CD14-positive monocyte (primary cell): ENCODE measurements at regions of chr19 and their contacts with region 1.

Region 1: GRCh38 chr19:40603389-40604135 is 2.4 kb downstream of the LTBP4 start:
- DNase-seq: peak; percentile 84 to 92 (median 90)
- H3K4me3 ChIP-seq: peak overlapping the region in 2 of 3 experiments; percentile 34 to 73
- H3K4me3 Mint-ChIP-seq: peak overlapping the region; percentile 73 to 91
- H3K27ac ChIP-seq: no peak overlapping the region
- H3K27ac Mint-ChIP-seq: peak overlapping the region in 3 of 7 donors; percentile 34 to 54 (median 46)
- H3K4me1 ChIP-seq: peaks cover 50 to 73% of the 10 kb centered on the region in 2 donors
- H3K4me1 Mint-ChIP-seq: peaks cover 67% of the 10 kb centered on the region
- H3K27me3 ChIP-seq: peaks cover 43 to 92% of the 10 kb centered on the region in 2 donors
- H3K27me3 Mint-ChIP-seq: peaks cover 78 to 98% (median 95%) of the 10 kb centered on the region in 3 donors
- CTCF ChIP-seq: no peak

Region 2: DNA sequence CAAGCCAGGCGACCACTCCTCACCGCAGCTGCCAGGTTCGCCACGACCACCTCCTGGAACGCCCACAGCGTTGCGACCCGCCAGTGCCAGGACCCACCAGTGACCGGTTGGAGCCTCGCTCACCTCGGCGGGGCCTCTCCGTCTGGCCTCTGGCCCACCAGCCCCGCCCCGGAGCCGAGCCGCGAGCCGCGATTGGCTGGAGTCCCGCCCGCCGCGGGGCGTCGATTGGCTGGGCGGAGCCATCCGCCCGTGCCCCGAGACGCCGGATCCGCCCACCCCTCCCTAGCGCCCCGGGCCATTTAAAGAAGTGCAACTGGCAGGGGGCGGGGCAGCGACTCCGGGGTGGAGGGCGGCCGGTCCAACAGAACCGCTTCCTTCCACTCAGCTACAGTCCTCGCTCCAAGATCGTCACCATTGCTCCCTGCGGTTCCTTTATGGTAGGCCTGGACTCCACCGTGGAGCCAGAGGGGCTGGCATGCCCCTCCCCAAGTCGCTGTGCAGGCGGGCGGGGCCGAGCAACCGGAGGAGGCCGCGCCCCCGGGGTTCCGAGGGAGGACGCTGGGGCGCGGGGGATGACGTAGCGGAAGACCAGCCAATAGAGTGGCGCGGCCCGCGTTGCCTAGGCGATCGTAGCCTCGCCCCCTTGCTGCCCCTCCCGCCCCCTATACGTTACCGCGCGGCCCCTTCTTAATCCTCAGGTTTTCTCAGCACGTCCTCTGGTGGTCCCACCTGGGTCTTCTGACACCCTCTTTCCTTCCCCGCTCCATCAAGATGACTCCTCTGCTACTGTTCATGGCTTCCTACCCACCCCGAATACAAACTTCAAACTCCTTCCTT is 159.2 kb before region 1 on chr19 and contains the start of gene SERTAD3:
- intact Hi-C with region 1: no loop called
- DNase-seq: peak; percentile 93 to 94 (median 93)
- H3K4me3 ChIP-seq: peak within 1 kb of the TSS; percentile 87 to 100 (median 100)
- H3K4me3 Mint-ChIP-seq: peak within 1 kb of the TSS; percentile 100
- H3K27ac ChIP-seq: peak within 1 kb of the TSS; percentile 95 to 97
- H3K27ac Mint-ChIP-seq: peak within 1 kb of the TSS; percentile 97 to 100 (median 98)
- H3K4me1 ChIP-seq: peaks cover 28 to 32% of the 10 kb centered on the region in 2 donors
- H3K4me1 Mint-ChIP-seq: peaks cover 27% of the 10 kb centered on the region
- H3K27me3 ChIP-seq: no peaks in the 10 kb centered on the region
- H3K27me3 Mint-ChIP-seq: peaks cover 0 to 1% (median 0%) of the 10 kb centered on the region in 3 donors
- CTCF ChIP-seq: no peak
- polyA plus RNA-seq, gene SERTAD3: 30.4 to 57.2 (median 49.4) TPM

Region 3: DNA sequence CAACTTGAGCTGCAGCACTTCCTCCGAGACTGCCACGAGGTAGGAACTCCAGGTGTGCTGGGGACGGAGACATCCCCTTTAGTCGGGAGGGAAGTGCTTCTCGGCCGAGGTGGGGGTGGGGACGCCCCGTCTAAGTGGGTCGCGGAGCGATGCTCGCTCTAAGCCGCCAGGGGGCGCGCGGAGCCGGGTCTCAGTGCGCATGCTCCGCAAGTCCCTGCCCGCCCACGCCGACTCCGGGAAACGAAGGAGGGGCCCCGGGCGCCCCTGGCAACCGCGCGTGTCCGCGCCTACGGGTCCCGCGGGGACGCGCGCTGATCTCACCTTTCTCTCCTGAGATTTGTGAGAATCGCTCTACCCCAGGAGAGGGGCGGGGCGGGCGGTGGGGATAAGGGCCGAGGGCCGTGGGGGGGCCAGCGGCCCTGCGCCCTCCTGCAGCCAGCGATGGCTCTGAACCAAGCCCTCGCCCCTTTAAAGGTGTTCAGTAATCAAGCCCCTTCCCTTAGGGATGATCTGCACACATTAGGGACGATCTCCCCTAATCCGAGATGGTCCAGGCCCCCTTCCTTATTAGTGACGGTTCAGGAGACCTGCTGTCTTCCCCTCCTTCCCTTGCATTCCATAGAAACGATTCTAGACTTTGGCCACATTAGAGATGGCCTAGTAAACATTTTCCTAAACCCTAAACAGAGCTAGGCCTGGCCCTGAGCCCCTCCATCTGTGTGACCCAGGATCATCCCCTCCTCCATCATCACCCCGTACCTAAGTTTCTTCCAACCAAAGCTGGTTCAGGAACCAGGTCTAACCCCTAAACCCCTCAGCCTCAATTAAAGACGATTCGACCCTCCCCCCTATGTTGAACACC is 74.2 kb before region 1 on chr19:
- intact Hi-C with region 1: loop called (anchors 1 to 5 kb)
- DNase-seq: peak; percentile 69 to 83 (median 80)
- H3K4me3 ChIP-seq: peak overlapping the region; percentile 32 to 79 (median 43)
- H3K4me3 Mint-ChIP-seq: peak overlapping the region; percentile 71 to 89
- H3K27ac ChIP-seq: no peak overlapping the region
- H3K27ac Mint-ChIP-seq: peak overlapping the region in 2 of 7 donors; percentile 37 to 69
- H3K4me1 ChIP-seq: peaks cover 13 to 17% of the 10 kb centered on the region in 2 donors
- H3K4me1 Mint-ChIP-seq: peaks cover 18% of the 10 kb centered on the region
- H3K27me3 ChIP-seq: peaks cover 16 to 37% of the 10 kb centered on the region in 2 donors
- H3K27me3 Mint-ChIP-seq: peaks cover 36 to 54% (median 52%) of the 10 kb centered on the region in 3 donors
- CTCF ChIP-seq: peak; percentile 99

Region 4: DNA sequence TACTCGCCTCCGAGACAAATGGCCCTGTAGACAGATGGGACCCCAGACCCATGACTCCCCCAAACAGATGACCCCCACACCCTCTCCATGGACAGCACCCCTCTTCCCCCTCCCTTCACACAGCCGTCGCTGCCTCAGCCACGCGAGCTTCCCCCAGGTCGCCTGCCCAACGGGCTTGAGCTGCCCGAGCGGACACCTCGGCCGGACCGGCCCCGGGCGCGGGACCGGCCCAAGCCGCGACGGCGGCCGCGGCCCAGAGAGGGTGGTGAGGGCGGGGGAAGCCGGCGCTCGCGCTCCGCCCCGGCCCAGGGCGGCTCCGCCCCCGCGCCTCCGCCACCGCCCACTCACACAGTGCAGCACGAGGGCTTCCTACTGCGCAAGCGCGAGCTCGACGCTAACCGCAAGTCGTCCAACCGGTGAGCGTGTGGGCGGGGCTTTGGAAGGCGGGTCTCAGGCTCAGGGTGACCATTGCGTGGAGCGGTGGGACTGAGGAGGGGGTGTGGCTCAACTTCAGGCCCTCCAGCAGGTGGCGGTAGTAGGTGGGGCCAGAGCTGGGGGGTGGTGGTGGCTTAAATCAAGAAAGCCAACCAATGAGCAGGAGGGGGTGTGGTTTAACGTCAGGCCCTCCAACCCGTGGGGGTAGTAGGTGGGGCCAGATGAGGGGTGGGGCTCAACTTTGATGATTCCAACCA is 33.1 kb before region 1 on chr19:
- intact Hi-C with region 1: loop called in 1 of 2 experiments (anchors 5 kb)
- DNase-seq: peak; percentile 100
- H3K4me3 ChIP-seq: peak overlapping the region in 2 of 3 experiments; percentile 32 to 70
- H3K4me3 Mint-ChIP-seq: peak overlapping the region; percentile 76 to 87
- H3K27ac ChIP-seq: peak overlapping the region in 1 of 2 donors; percentile 25
- H3K27ac Mint-ChIP-seq: peak overlapping the region; percentile 77 to 93 (median 83)
- H3K4me1 ChIP-seq: peaks cover 17 to 28% of the 10 kb centered on the region in 2 donors
- H3K4me1 Mint-ChIP-seq: peaks cover 13% of the 10 kb centered on the region
- H3K27me3 ChIP-seq: peaks cover 19 to 45% of the 10 kb centered on the region in 2 donors
- H3K27me3 Mint-ChIP-seq: peaks cover 43 to 48% (median 45%) of the 10 kb centered on the region in 3 donors
- CTCF ChIP-seq: peak; percentile 27